H1 (cell line): ENCODE measurements at regions of chr11 and their contacts with region 1.

Region 1: GRCh38 chr11:47259178-47259977 is 1.6 kb downstream of the NR1H3 start:
- DNase-seq: peak in 1 of 2 experiments; percentile 85
- H3K4me3 ChIP-seq: no peak overlapping the region
- H3K27ac ChIP-seq: no peak overlapping the region
- H3K4me1 ChIP-seq: peaks cover 2 to 15% (median 9%) of the 10 kb centered on the region in 4 experiments
- H3K27me3 ChIP-seq: no peaks in the 10 kb centered on the region
- CTCF ChIP-seq: peak; percentile 70 to 80 (median 74)
- EP300 ChIP-seq: no peak
- POLR2A ChIP-seq: no peak
- RAD21 ChIP-seq: peak; percentile 72 to 79

Region 2: DNA sequence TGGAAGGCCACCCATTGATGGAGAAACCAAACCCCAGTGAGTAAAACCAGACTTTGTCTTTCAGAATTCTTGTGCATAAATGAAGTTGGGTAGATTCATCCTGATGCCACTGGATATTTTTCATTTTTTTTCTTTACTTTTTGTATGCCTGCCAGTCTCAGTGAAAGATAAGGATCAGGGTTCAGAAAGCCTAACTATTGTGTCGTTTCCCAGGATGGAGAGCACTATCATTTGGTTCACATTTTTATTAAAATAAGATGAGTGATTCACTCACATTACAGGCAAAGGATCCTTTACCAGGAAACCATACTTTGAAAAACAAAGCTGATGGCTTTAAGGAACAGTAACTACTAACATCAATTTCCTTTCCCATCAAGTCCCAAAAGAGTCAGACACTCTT is 134.7 kb before region 1 on chr11:
- CTCF ChIA-PET with region 1: no interaction called
- POLR2A ChIA-PET with region 1: no interaction called
- DNase-seq: no peak
- H3K4me3 ChIP-seq: no peak overlapping the region
- H3K27ac ChIP-seq: no peak overlapping the region
- H3K4me1 ChIP-seq: peaks cover 0 to 7% (median 1%) of the 10 kb centered on the region in 4 experiments; a peak in 3 of 7 replicates
- H3K27me3 ChIP-seq: no peaks in the 10 kb centered on the region
- CTCF ChIP-seq: no peak
- EP300 ChIP-seq: no peak
- POLR2A ChIP-seq: no peak
- RAD21 ChIP-seq: no peak

Region 3: DNA sequence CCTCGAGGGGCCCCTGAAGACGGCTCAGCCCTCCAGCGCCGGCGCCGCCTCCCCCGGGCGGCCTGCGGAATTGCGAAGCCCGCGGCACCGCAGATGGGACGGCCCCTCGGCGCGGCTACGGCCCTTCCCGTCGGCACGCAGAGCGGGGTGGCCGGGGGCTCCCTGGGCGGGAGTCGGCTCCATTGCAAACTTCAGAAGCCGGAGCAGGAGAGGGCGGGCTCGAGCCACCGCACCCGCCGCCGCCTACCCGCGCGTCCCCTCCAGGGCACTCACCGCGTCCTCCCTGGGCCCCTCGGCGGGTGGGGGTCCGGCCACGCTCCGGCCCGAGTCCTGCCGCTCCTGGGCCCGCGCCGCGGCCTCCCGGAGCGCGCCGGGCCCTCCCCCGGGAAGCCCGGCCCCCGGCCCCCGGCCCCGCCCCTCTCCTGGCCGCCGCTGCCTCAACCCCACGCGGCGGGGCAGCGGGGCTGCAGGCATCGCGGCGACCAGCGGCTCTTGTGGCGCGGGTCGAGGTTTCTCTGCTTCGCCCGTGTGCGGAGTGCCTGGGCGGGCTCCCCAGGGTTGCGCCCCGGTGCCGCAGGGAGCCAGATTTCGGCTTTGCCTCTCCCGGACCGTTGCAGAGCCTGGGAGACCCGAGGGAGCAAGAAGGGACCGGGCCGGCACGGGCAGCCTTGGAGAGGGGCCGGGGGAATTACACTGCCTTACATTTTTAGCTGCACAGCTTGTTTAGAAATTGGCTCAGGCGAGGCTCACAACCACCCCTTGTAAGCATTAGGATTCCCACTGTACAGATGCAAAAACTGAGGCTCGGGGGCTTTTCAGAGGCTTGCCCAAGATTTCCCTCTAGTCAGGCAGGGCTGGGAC is 73.1 kb before region 1 on chr11 and contains the start of gene PACSIN3:
- CTCF ChIA-PET with region 1: interaction called, 53 read pairs
- POLR2A ChIA-PET with region 1: interaction called, 8 read pairs
- DNase-seq: peak in 1 of 2 experiments; percentile 81
- H3K4me3 ChIP-seq: peak within 1 kb of the TSS; percentile 62 to 92 (median 82)
- H3K27ac ChIP-seq: peak within 1 kb of the TSS; percentile 81
- H3K4me1 ChIP-seq: peaks cover 0 to 8% (median 6%) of the 10 kb centered on the region in 4 experiments; a peak in 5 of 7 replicates
- H3K27me3 ChIP-seq: peaks cover 0 to 6% (median 0%) of the 10 kb centered on the region in 4 experiments; a peak in 3 of 7 replicates
- CTCF ChIP-seq: no peak
- EP300 ChIP-seq: no peak
- POLR2A ChIP-seq: peak in 1 of 2 experiments; percentile 91; a peak in 2 of 3 replicates
- RAD21 ChIP-seq: no peak
- total RNA-seq, gene PACSIN3: 47.2 and 59.3 TPM in 2 replicates

Region 4: GRCh38 chr11:47233989-47234668 is 25.2 kb before region 1 on chr11:
- CTCF ChIA-PET with region 1: interaction called, 107 read pairs
- POLR2A ChIA-PET with region 1: interaction called, 14 read pairs
- DNase-seq: no peak
- H3K4me3 ChIP-seq: no peak overlapping the region
- H3K27ac ChIP-seq: no peak overlapping the region
- H3K4me1 ChIP-seq: 0 out of 7 replicates have a peak, but pooled peaks cover 0 to 2% (median 0%) of the 10 kb centered on the region in 4 experiments
- H3K27me3 ChIP-seq: no peaks in the 10 kb centered on the region
- CTCF ChIP-seq: peak; percentile 21 to 53 (median 52)
- EP300 ChIP-seq: no peak
- POLR2A ChIP-seq: peak in 1 of 2 experiments; percentile 17; a peak in 1 of 3 replicates
- RAD21 ChIP-seq: peak; percentile 51 to 58; a peak in 3 of 4 replicates

Region 5: GRCh38 chr11:47280860-47281259 is 21.5 kb after region 1 on chr11:
- CTCF ChIA-PET with region 1: interaction called, 72 read pairs
- POLR2A ChIA-PET with region 1: interaction called, 3 read pairs
- DNase-seq: no peak
- H3K4me3 ChIP-seq: no peak overlapping the region
- H3K27ac ChIP-seq: no peak overlapping the region
- H3K4me1 ChIP-seq: peaks cover 0 to 2% (median 0%) of the 10 kb centered on the region in 4 experiments; a peak in 1 of 7 replicates
- H3K27me3 ChIP-seq: no peaks in the 10 kb centered on the region; a peak in 1 of 7 replicates
- CTCF ChIP-seq: no peak
- EP300 ChIP-seq: no peak
- POLR2A ChIP-seq: no peak
- RAD21 ChIP-seq: no peak

Region 6: GRCh38 chr11:47340980-47341775 is 81.8 kb after region 1 on chr11:
- CTCF ChIA-PET with region 1: interaction called, 35 read pairs
- POLR2A ChIA-PET with region 1: interaction called, 3 read pairs
- DNase-seq: no peak
- H3K4me3 ChIP-seq: no peak overlapping the region
- H3K27ac ChIP-seq: no peak overlapping the region
- H3K4me1 ChIP-seq: no peaks in the 10 kb centered on the region
- H3K27me3 ChIP-seq: no peaks in the 10 kb centered on the region
- CTCF ChIP-seq: no peak
- EP300 ChIP-seq: no peak
- POLR2A ChIP-seq: no peak
- RAD21 ChIP-seq: no peak

Region 7: DNA sequence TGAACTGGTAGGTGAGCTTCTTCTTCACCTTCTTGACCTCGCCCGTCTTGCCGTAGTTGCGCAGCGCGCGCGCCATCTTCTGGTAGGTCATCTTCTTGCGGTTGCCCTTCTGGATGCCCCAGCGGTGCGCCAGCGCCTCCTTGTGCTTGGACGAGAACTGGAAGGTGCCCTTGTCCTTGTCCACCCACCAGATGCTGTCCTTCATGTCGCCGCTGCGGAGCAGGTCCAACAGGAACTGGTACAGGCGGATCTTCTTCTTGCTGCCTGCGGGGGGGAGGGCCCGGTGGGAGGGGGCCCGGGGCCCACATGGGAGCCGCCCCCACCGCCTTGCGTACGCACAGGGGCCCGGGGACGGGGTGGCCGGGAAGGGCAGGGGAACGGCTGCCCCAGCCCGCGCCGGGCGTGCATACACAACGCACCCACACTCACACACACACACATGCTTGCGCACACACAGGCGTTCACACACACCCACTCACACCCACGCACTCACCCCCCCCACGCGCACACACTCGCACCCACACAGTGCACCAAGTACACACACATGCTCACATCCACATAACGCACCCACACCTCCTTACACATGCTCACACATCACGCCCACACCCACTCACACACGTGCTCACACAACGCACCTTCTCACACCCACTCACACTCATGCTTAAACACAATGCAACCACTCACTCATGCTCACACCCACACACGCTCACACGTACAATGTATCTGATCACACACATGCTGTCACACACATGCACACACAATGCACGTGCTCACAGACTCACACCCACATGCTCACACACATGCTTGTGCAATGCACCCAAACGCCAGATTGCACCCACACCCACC is 96.1 kb after region 1 on chr11:
- CTCF ChIA-PET with region 1: interaction called, 35 read pairs
- POLR2A ChIA-PET with region 1: interaction called, 3 read pairs
- DNase-seq: peak; percentile 95 to 100
- H3K4me3 ChIP-seq: peak overlapping the region; percentile 5 to 59 (median 18); a peak in 5 of 8 replicates
- H3K27ac ChIP-seq: no peak overlapping the region
- H3K4me1 ChIP-seq: peaks cover 0 to 12% (median 5%) of the 10 kb centered on the region in 4 experiments; a peak in 6 of 7 replicates
- H3K27me3 ChIP-seq: no peaks in the 10 kb centered on the region
- CTCF ChIP-seq: peak in 2 of 3 experiments; percentile 100; a peak in 3 of 4 replicates
- EP300 ChIP-seq: 0 out of 3 replicates have a peak, but pooled peaks of 1 of the 2 experiments have one; percentile 9
- POLR2A ChIP-seq: peak in 1 of 2 experiments; percentile 64; a peak in 1 of 3 replicates
- RAD21 ChIP-seq: peak; percentile 99 to 100